ENCODE measurements at regions of chr15 and their contacts with region 1.

Region 1: GRCh38 chr15:39756806-39757522 is 25.7 kb downstream of the FSIP1 start:
- DNase-seq: peak in 5 of 14 experiments; percentile 3 to 75 (median 65)
- ATAC-seq: no peak
- H3K4me3 ChIP-seq: no peak overlapping the region
- H3K4me3 Mint-ChIP-seq: no peak overlapping the region
- H3K27ac ChIP-seq: no peak overlapping the region
- H3K27ac Mint-ChIP-seq: no peak overlapping the region
- H3K4me1 ChIP-seq: no peaks in the 10 kb centered on the region
- H3K4me1 Mint-ChIP-seq: no peaks in the 10 kb centered on the region
- H3K27me3 ChIP-seq: no peaks in the 10 kb centered on the region
- H3K27me3 Mint-ChIP-seq: peaks cover 7% of the 10 kb centered on the region
- CTCF ChIP-seq: peak; percentile 97

Region 2: DNA sequence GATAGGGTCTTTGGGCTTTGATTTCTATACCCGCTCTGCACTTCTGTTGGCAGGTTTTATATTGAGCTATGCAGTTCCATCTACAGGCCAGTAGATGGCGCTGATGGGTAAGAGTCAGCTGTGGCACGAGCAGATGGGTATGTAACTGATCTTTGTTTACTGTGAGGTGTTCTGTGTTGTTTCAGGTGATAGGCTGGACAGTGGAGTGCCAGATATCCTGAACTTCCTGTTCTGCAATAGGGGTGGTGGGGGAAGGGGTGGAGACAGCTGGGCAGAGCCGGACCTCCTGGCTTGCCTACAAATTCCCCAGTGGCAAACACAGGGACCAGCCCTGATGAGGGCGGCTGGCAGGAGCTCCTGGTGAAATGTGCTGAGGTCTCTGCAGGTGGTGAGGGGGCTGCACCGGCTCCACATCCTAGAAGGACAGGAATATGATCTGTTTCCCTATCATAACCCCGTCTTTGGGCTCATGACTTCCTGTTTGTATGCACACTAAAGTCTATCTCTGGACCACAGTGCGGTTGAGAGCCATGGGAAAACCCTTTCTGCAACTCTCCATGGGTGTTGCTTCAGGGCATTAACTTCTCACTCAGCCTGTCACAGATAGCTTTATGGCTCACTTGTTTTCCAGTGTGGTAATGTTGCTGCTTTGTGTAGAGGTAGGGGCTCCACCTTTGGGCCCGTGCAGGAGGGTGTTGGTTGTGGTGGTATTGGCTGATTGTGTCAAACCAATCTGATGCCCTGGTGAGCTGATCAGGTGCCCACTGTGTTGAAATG is 1316.4 kb before region 1 on chr15:
- CTCF ChIA-PET with region 1: interaction called, 14 read pairs
- POLR2A ChIA-PET with region 1: no interaction called
- intact Hi-C with region 1: loop called (anchors 5 to 10 kb)
- DNase-seq: peak; percentile 10 to 88 (median 35)
- ATAC-seq: peak; percentile 96
- H3K4me3 ChIP-seq: no peak overlapping the region
- H3K4me3 Mint-ChIP-seq: no peak overlapping the region
- H3K27ac ChIP-seq: no peak overlapping the region
- H3K27ac Mint-ChIP-seq: no peak overlapping the region
- H3K4me1 ChIP-seq: peaks cover 7% of the 10 kb centered on the region
- H3K4me1 Mint-ChIP-seq: peaks cover 5% of the 10 kb centered on the region
- H3K27me3 ChIP-seq: peaks cover 0 to 7% of the 10 kb centered on the region in 2 experiments
- H3K27me3 Mint-ChIP-seq: peaks cover 37% of the 10 kb centered on the region
- CTCF ChIP-seq: peak; percentile 99

Region 3: GRCh38 chr15:38817427-38818156 is 939.4 kb before region 1 on chr15:
- CTCF ChIA-PET with region 1: interaction called, 3 read pairs
- POLR2A ChIA-PET with region 1: no interaction called
- intact Hi-C with region 1: loop called (anchors 1 to 2 kb)
- DNase-seq: peak; percentile 72 to 85 (median 80)
- ATAC-seq: peak; percentile 99
- H3K4me3 ChIP-seq: no peak overlapping the region
- H3K4me3 Mint-ChIP-seq: no peak overlapping the region
- H3K27ac ChIP-seq: no peak overlapping the region
- H3K27ac Mint-ChIP-seq: no peak overlapping the region
- H3K4me1 ChIP-seq: peaks cover 4% of the 10 kb centered on the region
- H3K4me1 Mint-ChIP-seq: peaks cover 5% of the 10 kb centered on the region
- H3K27me3 ChIP-seq: no peaks in the 10 kb centered on the region
- H3K27me3 Mint-ChIP-seq: peaks cover 31% of the 10 kb centered on the region
- CTCF ChIP-seq: peak; percentile 99

Region 4: GRCh38 chr15:39580117-39580484 is 176.9 kb before region 1 on chr15:
- CTCF ChIA-PET with region 1: interaction called, 10 read pairs
- POLR2A ChIA-PET with region 1: interaction called, 4 read pairs
- intact Hi-C with region 1: loop called in 1 of 2 experiments (anchors 2 kb)
- DNase-seq: peak; percentile 65 to 88 (median 76)
- ATAC-seq: peak; percentile 91
- H3K4me3 ChIP-seq: peak overlapping the region; percentile 55
- H3K4me3 Mint-ChIP-seq: peak overlapping the region; percentile 40
- H3K27ac ChIP-seq: no peak overlapping the region
- H3K27ac Mint-ChIP-seq: no peak overlapping the region
- H3K4me1 ChIP-seq: peaks cover 27% of the 10 kb centered on the region
- H3K4me1 Mint-ChIP-seq: peaks cover 15% of the 10 kb centered on the region
- H3K27me3 ChIP-seq: peaks cover 17 to 28% of the 10 kb centered on the region in 2 experiments
- H3K27me3 Mint-ChIP-seq: peaks cover 81% of the 10 kb centered on the region
- CTCF ChIP-seq: peak; percentile 60

Region 5: DNA sequence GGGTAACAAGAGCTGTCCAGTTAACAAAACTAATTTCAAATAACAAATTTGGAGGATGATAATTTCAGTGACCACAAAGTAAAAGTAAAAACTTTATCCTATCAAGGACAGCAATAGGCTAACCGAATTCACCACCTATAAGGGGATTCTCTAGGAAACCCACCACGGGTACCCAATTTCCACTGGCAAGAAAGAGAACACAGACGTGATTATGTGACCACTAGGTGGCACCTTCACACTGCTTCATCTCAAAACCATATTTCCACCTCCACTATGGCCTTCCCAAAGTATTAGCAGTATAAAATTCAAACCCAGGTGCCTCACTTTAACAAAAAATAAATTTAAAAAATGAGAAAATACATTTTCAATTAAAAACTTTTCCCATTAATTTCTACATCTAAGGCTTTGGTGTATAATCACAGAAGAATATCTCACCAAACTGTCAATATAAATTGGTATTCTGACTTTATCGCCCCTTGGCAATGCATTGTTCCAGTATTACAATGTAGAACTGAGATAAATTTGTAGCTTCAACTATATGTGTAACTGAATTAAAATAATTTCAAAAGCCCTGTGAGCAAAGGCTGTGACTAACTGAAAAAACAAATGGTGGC is 70.9 kb before region 1 on chr15:
- CTCF ChIA-PET with region 1: interaction called, 5 read pairs
- POLR2A ChIA-PET with region 1: interaction called, 3 read pairs
- intact Hi-C with region 1: loop called (anchors 1 to 2 kb)
- DNase-seq: peak in 9 of 14 experiments; percentile 3 to 70 (median 12)
- ATAC-seq: no peak
- H3K4me3 ChIP-seq: no peak overlapping the region
- H3K4me3 Mint-ChIP-seq: no peak overlapping the region
- H3K27ac ChIP-seq: no peak overlapping the region
- H3K27ac Mint-ChIP-seq: no peak overlapping the region
- H3K4me1 ChIP-seq: no peaks in the 10 kb centered on the region
- H3K4me1 Mint-ChIP-seq: no peaks in the 10 kb centered on the region
- H3K27me3 ChIP-seq: no peaks in the 10 kb centered on the region
- H3K27me3 Mint-ChIP-seq: no peaks in the 10 kb centered on the region
- CTCF ChIP-seq: peak; percentile 94

Region 6: GRCh38 chr15:40274350-40275274 is 517.6 kb after region 1 on chr15:
- CTCF ChIA-PET with region 1: no interaction called
- POLR2A ChIA-PET with region 1: no interaction called
- intact Hi-C with region 1: no loop called
- DNase-seq: peak; percentile 78 to 94 (median 86)
- ATAC-seq: peak; percentile 89
- H3K4me3 ChIP-seq: no peak overlapping the region
- H3K4me3 Mint-ChIP-seq: no peak overlapping the region
- H3K27ac ChIP-seq: no peak overlapping the region
- H3K27ac Mint-ChIP-seq: no peak overlapping the region
- H3K4me1 ChIP-seq: peaks cover 12% of the 10 kb centered on the region
- H3K4me1 Mint-ChIP-seq: peaks cover 12% of the 10 kb centered on the region
- H3K27me3 ChIP-seq: peaks cover 18 to 19% of the 10 kb centered on the region in 2 experiments
- H3K27me3 Mint-ChIP-seq: peaks cover 23% of the 10 kb centered on the region
- CTCF ChIP-seq: peak; percentile 100

Region 7: DNA sequence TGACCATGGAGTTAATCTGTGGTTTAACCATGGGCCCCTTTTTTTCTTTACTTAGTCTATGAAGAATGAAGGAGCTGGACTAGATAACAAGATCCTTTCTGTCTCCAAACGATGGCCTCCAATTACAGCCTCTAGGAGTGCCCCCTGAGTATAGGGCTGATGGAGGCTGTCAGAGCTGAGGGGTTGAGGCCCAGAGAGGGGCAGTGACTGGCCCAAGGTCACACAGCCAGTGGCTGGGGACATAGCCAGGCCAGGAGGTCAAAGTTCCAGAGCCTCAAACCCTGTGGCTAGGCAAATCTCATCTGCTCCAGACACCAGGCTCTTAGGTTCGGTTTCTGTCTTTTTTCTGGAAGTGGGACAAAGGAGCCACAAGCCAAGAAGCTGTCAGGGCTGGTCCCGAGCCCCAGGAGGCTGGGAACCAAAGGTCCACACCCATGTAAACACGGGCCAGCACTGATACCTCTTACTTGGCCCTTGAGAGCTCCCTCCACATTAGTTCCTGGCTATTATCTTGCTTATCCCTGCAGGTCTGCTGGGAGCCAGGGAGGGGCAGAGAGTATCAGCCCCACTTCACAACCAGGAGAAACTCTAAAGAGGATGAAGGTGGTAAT is 1106.8 kb after region 1 on chr15:
- CTCF ChIA-PET with region 1: no interaction called
- POLR2A ChIA-PET with region 1: no interaction called
- intact Hi-C with region 1: no loop called
- DNase-seq: no peak
- ATAC-seq: no peak
- H3K4me3 ChIP-seq: no peak overlapping the region
- H3K4me3 Mint-ChIP-seq: no peak overlapping the region
- H3K27ac ChIP-seq: no peak overlapping the region
- H3K27ac Mint-ChIP-seq: no peak overlapping the region
- H3K4me1 ChIP-seq: peaks cover 9% of the 10 kb centered on the region
- H3K4me1 Mint-ChIP-seq: peaks cover 7% of the 10 kb centered on the region
- H3K27me3 ChIP-seq: no peaks in the 10 kb centered on the region
- H3K27me3 Mint-ChIP-seq: no peaks in the 10 kb centered on the region
- CTCF ChIP-seq: no peak